ENCODE measurements at regions of chr7 and their contacts with region 1.

Region 1: DNA sequence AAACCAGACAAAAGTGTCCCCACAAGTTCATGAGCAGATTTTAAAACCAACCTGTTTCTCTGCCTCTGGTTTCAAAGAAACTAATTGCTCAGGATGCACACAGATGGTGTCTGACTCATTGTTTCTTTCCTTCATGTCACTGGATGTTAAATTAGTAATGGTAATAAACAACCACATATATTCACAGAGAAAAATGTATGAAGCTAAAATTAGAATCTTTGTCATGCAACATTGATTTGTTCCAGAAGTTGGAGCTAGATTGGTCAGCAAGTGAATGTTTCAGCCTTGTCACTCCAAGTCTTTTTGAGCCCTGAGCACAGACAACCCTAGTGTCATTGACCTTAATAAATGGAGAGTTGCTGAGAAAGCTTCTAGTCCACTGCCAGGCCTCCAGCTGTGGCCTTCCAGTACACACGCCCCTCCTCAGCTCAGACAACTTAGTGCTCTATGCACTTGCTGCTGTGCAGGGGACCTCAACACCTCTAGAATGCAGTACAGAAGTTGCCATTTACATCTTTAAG is 175.9 kb downstream of the CCDC71L start:
- DNase-seq: no peak
- H3K4me3 Mint-ChIP-seq: no peak overlapping the region
- H3K27ac Mint-ChIP-seq: peak overlapping the region; percentile 69
- H3K4me1 Mint-ChIP-seq: peaks cover 53% of the 10 kb centered on the region
- H3K27me3 Mint-ChIP-seq: no peaks in the 10 kb centered on the region

Region 2: DNA sequence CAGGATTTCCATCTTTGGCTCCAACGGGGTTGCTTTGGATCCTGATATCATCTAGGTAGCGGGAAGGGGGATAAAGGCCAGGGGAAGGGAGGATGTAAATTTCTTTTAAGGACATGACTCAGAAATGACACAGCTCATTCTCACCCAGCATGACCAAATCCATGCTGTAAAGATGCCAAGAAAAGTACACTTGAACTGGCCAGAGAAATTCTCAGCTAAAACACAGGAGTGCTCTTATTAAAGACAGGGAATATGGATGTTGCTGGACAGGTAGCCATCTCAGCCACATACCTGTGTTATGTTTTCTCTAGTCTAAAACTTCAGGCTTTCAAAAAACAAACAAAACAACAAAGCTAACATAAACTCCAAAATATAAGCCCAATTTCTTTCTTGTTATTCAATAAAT is 268.6 kb before region 1 on chr7:
- intact Hi-C with region 1: no loop called
- DNase-seq: no peak
- H3K4me3 Mint-ChIP-seq: no peak overlapping the region
- H3K27ac Mint-ChIP-seq: no peak overlapping the region
- H3K4me1 Mint-ChIP-seq: no peaks in the 10 kb centered on the region
- H3K27me3 Mint-ChIP-seq: peaks cover 34% of the 10 kb centered on the region

Region 3: DNA sequence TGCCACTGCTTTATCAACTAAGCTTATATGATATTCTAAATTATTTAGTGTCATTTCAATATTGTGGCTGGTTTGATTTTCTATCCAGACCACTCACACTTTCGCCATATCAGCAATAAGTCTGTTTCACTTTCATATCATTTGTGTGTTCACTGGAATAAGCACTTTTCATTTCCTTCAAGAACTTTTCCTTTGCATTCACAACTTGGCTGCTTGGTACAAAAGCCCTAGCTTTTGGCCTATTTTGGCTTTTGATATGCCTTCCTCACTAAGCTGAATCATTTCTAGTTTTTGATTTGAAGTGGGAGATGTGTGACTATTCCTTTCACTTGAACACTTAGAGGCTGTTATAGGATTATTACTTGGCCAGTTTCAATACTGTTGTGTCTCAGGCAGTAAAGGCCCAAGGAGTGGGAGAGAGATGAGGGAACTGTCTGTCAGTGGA is 79.4 kb before region 1 on chr7:
- intact Hi-C with region 1: loop called (anchors 1 kb)
- DNase-seq: no peak
- H3K4me3 Mint-ChIP-seq: no peak overlapping the region
- H3K27ac Mint-ChIP-seq: peak overlapping the region; percentile 67
- H3K4me1 Mint-ChIP-seq: peaks cover 28% of the 10 kb centered on the region
- H3K27me3 Mint-ChIP-seq: peaks cover 4% of the 10 kb centered on the region

Region 4: DNA sequence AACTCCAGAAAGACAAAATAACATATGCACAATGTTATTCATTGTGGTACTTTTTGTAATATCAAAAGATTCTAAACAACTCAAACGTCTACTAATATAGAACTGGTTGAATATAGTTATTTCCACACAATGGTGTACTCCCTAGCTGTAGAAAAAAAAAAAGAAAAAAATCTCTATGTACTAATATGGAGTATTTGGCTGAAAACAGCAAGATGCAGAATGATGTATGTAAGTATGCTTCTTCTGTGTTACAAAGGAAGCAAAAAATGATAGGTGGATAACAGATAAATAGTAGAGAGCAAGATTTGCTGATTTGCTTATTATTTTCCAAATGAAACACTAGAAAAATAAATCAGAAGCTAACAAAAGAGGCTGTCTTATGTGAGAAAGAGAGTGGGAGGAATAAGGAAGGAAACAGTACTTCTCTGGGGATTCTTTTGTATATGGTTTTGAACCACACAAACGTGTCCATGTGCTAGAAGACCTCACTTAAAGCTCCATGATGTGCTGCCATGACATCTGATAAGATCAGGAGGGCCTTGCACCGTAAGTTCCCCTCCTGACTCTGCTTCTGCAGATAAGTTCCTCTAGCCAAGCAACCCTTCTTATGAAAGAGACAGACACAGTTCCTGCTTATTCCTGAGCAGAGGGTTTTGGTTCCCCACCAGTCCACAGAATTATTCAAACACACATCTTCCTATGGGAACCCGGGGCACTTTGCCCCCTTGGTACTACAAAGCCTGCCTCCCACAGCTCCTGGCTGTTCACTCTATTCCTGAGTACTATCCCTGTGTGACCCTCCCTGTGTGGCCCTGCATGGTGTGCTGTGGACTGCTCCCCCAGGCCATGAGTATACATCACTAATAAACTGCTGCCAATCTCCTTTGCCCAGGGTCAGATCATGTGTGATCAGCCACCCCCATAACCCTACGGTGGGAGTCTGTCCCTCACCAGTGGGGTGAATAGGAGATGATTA is 16.8 kb after region 1 on chr7:
- intact Hi-C with region 1: loop called (anchors 2 kb)
- DNase-seq: no peak
- H3K4me3 Mint-ChIP-seq: no peak overlapping the region
- H3K27ac Mint-ChIP-seq: peak overlapping the region; percentile 24
- H3K4me1 Mint-ChIP-seq: peaks cover 17% of the 10 kb centered on the region
- H3K27me3 Mint-ChIP-seq: no peaks in the 10 kb centered on the region

Region 5: DNA sequence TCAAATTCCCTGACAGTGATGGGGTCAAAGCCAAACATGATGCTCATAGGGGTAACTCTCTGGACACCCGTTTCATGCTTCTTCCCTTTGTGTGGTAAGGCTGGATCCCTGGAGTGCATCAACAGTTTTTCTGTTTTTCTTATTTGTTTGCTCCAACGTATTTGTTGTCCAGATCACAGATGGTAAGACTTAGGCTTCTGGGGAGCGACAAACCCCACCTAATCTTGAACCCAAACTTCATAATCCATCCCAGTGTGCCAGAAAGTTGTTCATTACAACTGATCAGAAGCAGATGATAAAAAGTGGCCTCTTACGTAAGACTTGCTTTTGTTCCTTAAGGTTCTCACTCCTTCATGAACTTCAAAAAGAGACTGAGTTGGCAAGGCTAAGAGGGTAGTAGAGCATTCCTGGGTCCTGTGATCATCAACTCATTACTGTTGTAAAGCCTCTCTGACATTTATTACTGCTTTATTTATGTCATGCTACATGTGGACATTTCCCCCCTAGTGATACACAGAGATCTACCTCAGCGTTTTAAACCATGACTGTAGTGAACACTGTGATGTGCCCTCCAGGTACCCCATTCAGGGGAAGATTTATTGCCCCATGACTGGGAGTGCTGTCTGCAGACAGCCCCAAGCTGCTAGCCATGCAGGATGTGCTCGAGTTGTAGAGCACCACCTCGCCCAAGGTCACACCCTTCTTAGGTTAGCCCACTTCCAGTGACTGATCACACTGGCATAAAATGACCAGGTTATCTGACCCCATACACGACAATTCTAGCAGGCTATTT is 50.3 kb after region 1 on chr7:
- intact Hi-C with region 1: no loop called
- DNase-seq: no peak
- H3K4me3 Mint-ChIP-seq: no peak overlapping the region
- H3K27ac Mint-ChIP-seq: no peak overlapping the region
- H3K4me1 Mint-ChIP-seq: peaks cover 3% of the 10 kb centered on the region
- H3K27me3 Mint-ChIP-seq: no peaks in the 10 kb centered on the region

Region 6: DNA sequence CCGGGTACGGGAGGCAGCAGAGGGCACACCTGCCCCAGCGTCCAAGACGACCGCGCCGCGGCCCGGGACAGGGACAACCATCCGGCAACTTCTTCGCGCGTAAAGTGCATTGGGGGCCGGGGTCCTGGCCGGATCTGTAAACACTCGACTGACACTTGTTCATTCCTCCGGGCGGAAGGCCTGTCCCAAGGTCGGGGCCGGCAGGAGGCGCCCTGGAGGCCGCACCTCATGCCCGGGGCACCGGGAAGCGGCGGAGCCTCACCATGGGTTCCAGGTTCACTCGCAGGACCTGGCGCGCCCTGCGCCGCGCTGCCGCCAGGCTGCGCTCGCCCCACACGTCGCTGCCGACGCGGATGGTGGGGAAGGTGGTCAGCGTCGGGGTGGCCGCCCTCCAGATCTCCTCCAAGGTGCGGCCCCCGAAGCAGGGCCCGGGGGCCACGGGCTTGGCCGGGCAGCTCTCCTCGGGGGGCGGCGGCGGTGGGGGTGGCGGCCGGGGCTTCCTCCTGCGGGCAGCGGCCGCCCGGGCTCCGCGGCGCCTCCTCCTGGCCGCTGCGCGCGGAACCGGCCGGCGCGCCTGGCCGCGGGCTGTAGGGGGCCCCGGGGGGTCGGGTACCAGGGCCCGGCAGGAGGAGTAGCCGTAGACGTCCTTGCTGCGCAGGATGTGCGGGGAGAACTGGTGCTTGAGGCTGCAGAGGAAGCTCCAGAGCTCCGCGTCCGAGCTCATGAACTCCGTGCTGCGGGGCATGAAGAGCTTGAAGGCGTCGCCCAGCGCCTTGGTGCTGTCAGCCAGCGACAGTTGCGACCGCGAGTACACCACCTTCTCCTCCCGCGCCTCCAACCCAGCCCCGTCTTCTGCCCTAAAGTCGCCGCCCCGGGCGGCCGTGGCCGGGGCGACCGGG is 175.1 kb after region 1 on chr7:
- intact Hi-C with region 1: loop called (anchors 5 kb)
- DNase-seq: peak; percentile 82
- H3K4me3 Mint-ChIP-seq: peak overlapping the region; percentile 96
- H3K27ac Mint-ChIP-seq: peak overlapping the region; percentile 93
- H3K4me1 Mint-ChIP-seq: peaks cover 33% of the 10 kb centered on the region
- H3K27me3 Mint-ChIP-seq: no peaks in the 10 kb centered on the region

Region 7: GRCh38 chr7:106774768-106775551 is 289.9 kb after region 1 on chr7:
- intact Hi-C with region 1: loop called (anchors 1 kb)
- DNase-seq: no peak
- H3K4me3 Mint-ChIP-seq: no peak overlapping the region
- H3K27ac Mint-ChIP-seq: peak overlapping the region; percentile 14
- H3K4me1 Mint-ChIP-seq: peaks cover 36% of the 10 kb centered on the region
- H3K27me3 Mint-ChIP-seq: no peaks in the 10 kb centered on the region